ENCODE measurements at regions of chr17 and their contacts with region 1.

Region 1: GRCh38 chr17:69523244-69523861 is 108.9 kb downstream of the MAP2K6 start:
- DNase-seq: peak; percentile 50
- H3K4me3 ChIP-seq: no peak overlapping the region
- H3K27ac ChIP-seq: no peak overlapping the region
- H3K4me1 ChIP-seq: no peaks in the 10 kb centered on the region; a peak in 1 of 4 replicates
- H3K27me3 ChIP-seq: no peaks in the 10 kb centered on the region
- CTCF ChIP-seq: peak; percentile 86
- EP300 ChIP-seq: no peak
- RAD21 ChIP-seq: peak; percentile 90

Region 2: GRCh38 chr17:69335058-69335457 is 188.3 kb before region 1 on chr17:
- CTCF ChIA-PET with region 1: interaction called, 28 read pairs
- POLR2A ChIA-PET with region 1: no interaction called
- DNase-seq: peak; percentile 36
- H3K4me3 ChIP-seq: no peak overlapping the region
- H3K27ac ChIP-seq: no peak overlapping the region
- H3K4me1 ChIP-seq: no peaks in the 10 kb centered on the region
- H3K27me3 ChIP-seq: no peaks in the 10 kb centered on the region
- CTCF ChIP-seq: peak; percentile 47
- EP300 ChIP-seq: no peak
- RAD21 ChIP-seq: peak; percentile 73

Region 3: DNA sequence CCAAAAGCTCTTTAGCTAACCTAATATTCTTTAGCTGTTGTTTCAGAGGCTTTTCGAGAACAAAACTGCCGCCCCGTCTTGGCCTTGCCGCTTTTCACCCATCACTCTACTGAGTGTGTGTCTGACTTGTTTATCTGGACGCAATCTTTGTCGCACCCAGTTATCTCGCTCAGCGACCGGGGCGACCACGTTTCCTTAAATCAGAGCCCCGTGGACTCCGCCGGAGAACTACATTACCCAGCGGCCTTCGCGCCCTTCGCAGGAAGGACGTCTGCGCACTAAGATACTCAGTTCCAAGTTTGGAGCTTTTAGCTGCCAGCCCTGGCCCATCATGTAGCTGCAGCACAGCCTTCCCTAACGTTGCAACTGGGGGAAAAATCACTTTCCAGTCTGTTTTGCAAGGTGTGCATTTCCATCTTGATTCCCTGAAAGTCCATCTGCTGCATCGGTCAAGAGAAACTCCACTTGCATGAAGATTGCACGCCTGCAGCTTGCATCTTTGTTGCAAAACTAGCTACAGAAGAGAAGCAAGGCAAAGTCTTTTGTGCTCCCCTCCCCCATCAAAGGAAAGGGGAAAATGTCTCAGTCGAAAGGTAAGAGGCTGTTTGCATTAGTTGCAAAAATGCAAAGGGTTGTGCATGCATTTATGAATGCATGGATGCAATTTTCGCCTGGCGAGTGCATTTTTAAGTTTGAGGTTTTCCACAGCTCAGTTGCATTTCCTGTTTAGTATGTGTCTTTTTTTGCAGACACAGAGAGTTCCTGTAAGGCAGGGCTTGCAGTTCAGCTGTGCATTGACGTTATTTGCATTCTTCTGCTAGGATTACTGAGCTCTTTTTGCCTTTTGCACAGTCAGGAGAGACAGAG is 108.7 kb before region 1 on chr17 and contains the start of gene MAP2K6:
- CTCF ChIA-PET with region 1: interaction called, 18 read pairs
- POLR2A ChIA-PET with region 1: no interaction called
- DNase-seq: peak; percentile 79
- H3K4me3 ChIP-seq: peak within 1 kb of the TSS; percentile 69 to 77
- H3K27ac ChIP-seq: peak within 1 kb of the TSS in 1 of 2 experiments; percentile 84; a peak in 2 of 4 replicates
- H3K4me1 ChIP-seq: peaks cover 21 to 28% of the 10 kb centered on the region in 2 experiments; a peak in 3 of 4 replicates
- H3K27me3 ChIP-seq: no peaks in the 10 kb centered on the region
- CTCF ChIP-seq: no peak
- EP300 ChIP-seq: 0 out of 4 replicates have a peak, but pooled peaks of 1 of the 2 experiments have one; percentile 18
- RAD21 ChIP-seq: peak; percentile 1; the same call in 1 of the 2 replicates
- polyA plus RNA-seq, gene MAP2K6: 6.5 and 6.7 TPM in 2 replicates

Region 4: DNA sequence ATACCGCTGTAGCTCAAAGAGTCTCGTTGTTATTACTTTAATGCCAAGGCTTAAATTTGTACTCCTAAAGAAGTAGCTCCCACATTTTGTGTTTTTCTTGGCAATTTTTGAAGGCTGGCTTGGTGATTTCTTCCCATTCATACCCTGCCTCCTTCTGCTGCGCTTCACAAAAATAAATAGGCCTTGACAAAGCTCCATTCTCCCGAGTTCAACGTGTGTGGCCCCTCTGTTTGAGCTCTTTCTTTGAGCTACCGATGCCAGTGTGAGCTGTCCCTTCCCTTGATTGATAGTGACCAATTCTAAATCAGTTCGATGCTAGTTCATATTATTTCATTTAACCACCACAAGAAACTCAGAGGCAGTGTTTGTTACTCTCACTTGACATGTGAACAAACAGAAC is 12.1 kb before region 1 on chr17:
- CTCF ChIA-PET with region 1: interaction called, 91 read pairs
- POLR2A ChIA-PET with region 1: no interaction called
- DNase-seq: no peak
- H3K4me3 ChIP-seq: no peak overlapping the region
- H3K27ac ChIP-seq: no peak overlapping the region
- H3K4me1 ChIP-seq: no peaks in the 10 kb centered on the region
- H3K27me3 ChIP-seq: no peaks in the 10 kb centered on the region
- CTCF ChIP-seq: no peak
- EP300 ChIP-seq: no peak
- RAD21 ChIP-seq: no peak

Region 5: GRCh38 chr17:69551212-69552010 is 28.1 kb after region 1 on chr17:
- CTCF ChIA-PET with region 1: interaction called, 18 read pairs
- POLR2A ChIA-PET with region 1: no interaction called
- DNase-seq: no peak
- H3K4me3 ChIP-seq: no peak overlapping the region
- H3K27ac ChIP-seq: no peak overlapping the region
- H3K4me1 ChIP-seq: no peaks in the 10 kb centered on the region
- H3K27me3 ChIP-seq: no peaks in the 10 kb centered on the region
- CTCF ChIP-seq: no peak
- EP300 ChIP-seq: no peak
- RAD21 ChIP-seq: no peak

Region 6: DNA sequence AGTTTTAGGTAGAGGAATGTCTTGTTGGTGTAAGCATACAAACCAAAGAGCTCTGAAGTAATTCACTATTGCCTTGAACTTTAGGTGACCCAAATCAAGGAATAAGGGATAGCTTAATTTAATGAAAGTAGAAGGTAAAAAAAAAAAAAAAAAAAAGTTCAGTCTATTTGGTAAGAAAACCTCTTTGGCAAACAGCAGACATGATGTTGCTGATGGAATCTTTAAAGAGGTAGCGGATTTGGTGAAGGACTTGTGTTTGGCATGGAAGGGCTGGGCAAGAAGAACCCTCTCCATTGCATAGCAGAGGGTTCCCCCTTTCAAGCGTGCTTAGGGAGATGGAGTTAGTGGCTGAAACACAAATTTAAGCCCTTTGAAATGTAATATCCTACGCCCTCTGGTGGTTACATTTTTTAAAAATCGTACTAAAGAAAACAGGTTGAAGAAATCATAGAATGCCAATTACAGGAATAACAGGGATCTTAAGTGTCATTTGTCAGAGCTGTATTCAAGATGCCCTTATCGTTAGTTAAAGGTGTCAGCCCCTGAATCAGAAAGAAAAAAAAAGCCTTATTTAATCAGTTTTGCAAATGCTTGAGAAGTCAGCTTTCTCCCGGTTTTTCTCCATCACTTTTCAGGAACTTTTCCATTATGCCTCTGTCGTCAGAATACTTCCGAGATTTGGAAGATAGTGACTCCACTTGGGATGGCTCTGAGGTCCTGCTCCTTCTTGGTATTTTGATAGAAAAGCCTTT is 1029.1 kb after region 1 on chr17:
- CTCF ChIA-PET with region 1: interaction called, 15 read pairs
- POLR2A ChIA-PET with region 1: no interaction called
- DNase-seq: peak; percentile 72
- H3K4me3 ChIP-seq: no peak overlapping the region
- H3K27ac ChIP-seq: no peak overlapping the region; a peak in 1 of 4 replicates
- H3K4me1 ChIP-seq: peaks cover 0 to 2% of the 10 kb centered on the region in 2 experiments; a peak in 2 of 4 replicates
- H3K27me3 ChIP-seq: no peaks in the 10 kb centered on the region
- CTCF ChIP-seq: peak; percentile 81
- EP300 ChIP-seq: no peak
- RAD21 ChIP-seq: peak; percentile 87

Measured in SK-N-SH (cell line).